CD4-positive, alpha-beta T cell (primary cell): ENCODE measurements at regions of chr12 and their contacts with region 1.

Region 1: DNA sequence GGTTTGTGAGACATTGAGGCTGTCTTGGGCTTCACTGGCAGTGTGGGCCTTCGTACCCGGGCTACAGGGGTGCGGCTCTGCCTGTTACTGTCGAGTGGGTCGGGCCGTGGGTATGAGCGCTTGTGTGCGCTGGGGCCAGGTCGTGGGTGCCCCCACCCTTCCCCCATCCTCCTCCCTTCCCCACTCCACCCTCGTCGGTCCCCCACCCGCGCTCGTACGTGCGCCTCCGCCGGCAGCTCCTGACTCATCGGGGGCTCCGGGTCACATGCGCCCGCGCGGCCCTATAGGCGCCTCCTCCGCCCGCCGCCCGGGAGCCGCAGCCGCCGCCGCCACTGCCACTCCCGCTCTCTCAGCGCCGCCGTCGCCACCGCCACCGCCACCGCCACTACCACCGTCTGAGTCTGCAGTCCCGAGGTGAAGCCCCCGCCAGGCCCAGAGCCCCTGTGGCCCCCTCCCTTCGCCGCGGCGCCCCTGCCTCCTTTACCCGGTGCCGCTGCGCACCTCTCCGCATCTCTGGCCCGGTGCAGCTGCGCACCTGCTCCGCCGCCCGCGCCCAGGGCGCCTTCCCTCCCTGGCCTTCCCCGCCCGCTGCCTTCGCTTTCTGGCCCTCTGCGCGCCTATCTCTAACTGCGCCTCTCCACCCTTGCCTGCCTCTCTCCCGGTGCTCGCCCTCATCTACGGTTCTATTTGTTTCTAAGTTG is at the start of gene ENO2:
- DNase-seq: peak; percentile 72 to 93 (median 86)
- ATAC-seq: peak; percentile 93
- H3K4me3 ChIP-seq: peak within 1 kb of the TSS; percentile 65
- H3K4me3 Mint-ChIP-seq: peak within 1 kb of the TSS; percentile 94
- H3K27ac ChIP-seq: peak within 1 kb of the TSS; percentile 84 to 90
- H3K27ac Mint-ChIP-seq: peak within 1 kb of the TSS; percentile 82
- H3K4me1 ChIP-seq: peaks cover 32% of the 10 kb centered on the region
- H3K4me1 Mint-ChIP-seq: peaks cover 31% of the 10 kb centered on the region
- H3K27me3 ChIP-seq: no peaks in the 10 kb centered on the region
- H3K27me3 Mint-ChIP-seq: no peaks in the 10 kb centered on the region
- CTCF ChIP-seq: no peak
- total RNA-seq, gene ENO2: 85.6 to 103 TPM

Region 2: DNA sequence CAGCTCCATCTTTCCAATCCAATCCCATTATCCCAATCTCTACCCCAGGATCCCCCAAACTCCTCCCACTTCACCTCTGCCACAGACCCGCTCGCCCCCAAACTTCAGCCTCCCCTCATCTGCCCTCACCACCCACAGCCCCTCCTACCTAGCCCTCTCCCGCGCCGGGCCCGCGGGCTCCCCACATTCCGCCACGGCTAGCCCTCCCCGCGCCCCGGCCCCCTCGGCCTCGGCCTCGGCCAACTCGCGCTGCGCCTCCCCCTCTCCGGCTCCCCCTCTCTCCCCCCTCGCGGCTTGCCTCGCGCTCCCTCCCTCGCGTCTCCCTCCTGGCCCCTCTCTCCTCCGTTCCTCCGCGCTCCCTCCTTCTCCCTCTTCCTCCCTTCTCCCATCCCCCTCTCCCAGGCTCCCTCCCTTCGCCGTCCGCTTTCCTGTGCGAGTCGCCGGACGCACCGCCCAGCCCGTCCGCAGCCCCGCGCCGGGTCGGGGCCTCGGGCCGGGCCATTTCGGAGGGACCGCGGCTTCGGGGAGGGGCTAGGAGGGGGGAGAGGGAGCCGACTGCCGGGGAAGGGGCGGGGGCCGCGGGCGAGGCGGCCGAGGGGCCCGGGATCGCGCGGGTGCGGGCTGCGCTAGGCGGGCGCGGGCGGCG is 13.1 kb after region 1 on chr12 and contains the start of gene ATN1:
- CTCF ChIA-PET with region 1: no interaction called
- POLR2A ChIA-PET with region 1: interaction called, 12 read pairs
- intact Hi-C with region 1: no loop called
- DNase-seq: peak in 7 of 14 experiments; percentile 33 to 69 (median 54)
- ATAC-seq: peak; percentile 41
- H3K4me3 ChIP-seq: peak within 1 kb of the TSS; percentile 65
- H3K4me3 Mint-ChIP-seq: peak within 1 kb of the TSS; percentile 95
- H3K27ac ChIP-seq: peak within 1 kb of the TSS; percentile 79 to 82
- H3K27ac Mint-ChIP-seq: peak within 1 kb of the TSS; percentile 87
- H3K4me1 ChIP-seq: peaks cover 49% of the 10 kb centered on the region
- H3K4me1 Mint-ChIP-seq: peaks cover 56% of the 10 kb centered on the region
- H3K27me3 ChIP-seq: no peaks in the 10 kb centered on the region
- H3K27me3 Mint-ChIP-seq: no peaks in the 10 kb centered on the region
- CTCF ChIP-seq: no peak
- total RNA-seq, gene ATN1: 28.7 to 29.6 TPM

Region 3: GRCh38 chr12:6953442-6954315 is 39.3 kb after region 1 on chr12:
- CTCF ChIA-PET with region 1: no interaction called
- POLR2A ChIA-PET with region 1: no interaction called
- intact Hi-C with region 1: no loop called
- DNase-seq: peak in 13 of 14 experiments; percentile 50 to 90 (median 69)
- ATAC-seq: peak; percentile 45
- H3K4me3 ChIP-seq: peak overlapping the region; percentile 98
- H3K4me3 Mint-ChIP-seq: peak overlapping the region; percentile 100
- H3K27ac ChIP-seq: peak overlapping the region; percentile 80 to 96
- H3K27ac Mint-ChIP-seq: peak overlapping the region; percentile 97
- H3K4me1 ChIP-seq: peaks cover 94% of the 10 kb centered on the region
- H3K4me1 Mint-ChIP-seq: peaks cover 89% of the 10 kb centered on the region
- H3K27me3 ChIP-seq: no peaks in the 10 kb centered on the region
- H3K27me3 Mint-ChIP-seq: no peaks in the 10 kb centered on the region
- CTCF ChIP-seq: no peak